Activated CD4-positive, alpha-beta T cell treated with anti-CD3 and anti-CD28 coated beads, Interleukin-2, amount 10 ng/mL, durations not matched to agents 7 days and 5 days (primary cell): ENCODE measurements at regions of chr6 and their contacts with region 1.

Region 1: GRCh38 chr6:111709615-111710398 is 104.1 kb upstream of the TRAF3IP2 start:
- DNase-seq: peak; percentile 66
- H3K4me3 Mint-ChIP-seq: no peak overlapping the region
- H3K27ac Mint-ChIP-seq: peak overlapping the region; percentile 82
- H3K4me1 Mint-ChIP-seq: peaks cover 52% of the 10 kb centered on the region
- H3K27me3 Mint-ChIP-seq: no peaks in the 10 kb centered on the region

Region 2: GRCh38 chr6:111992851-111993250 is 283.0 kb after region 1 on chr6:
- CTCF ChIA-PET with region 1: interaction called, 10 read pairs
- POLR2A ChIA-PET with region 1: no interaction called
- DNase-seq: peak; percentile 48
- H3K4me3 Mint-ChIP-seq: no peak overlapping the region
- H3K27ac Mint-ChIP-seq: peak overlapping the region; percentile 81
- H3K4me1 Mint-ChIP-seq: peaks cover 76% of the 10 kb centered on the region
- H3K27me3 Mint-ChIP-seq: no peaks in the 10 kb centered on the region